OCI-LY7 (cell line): ENCODE measurements at regions of chr18 and their contacts with region 1.

Region 1: DNA sequence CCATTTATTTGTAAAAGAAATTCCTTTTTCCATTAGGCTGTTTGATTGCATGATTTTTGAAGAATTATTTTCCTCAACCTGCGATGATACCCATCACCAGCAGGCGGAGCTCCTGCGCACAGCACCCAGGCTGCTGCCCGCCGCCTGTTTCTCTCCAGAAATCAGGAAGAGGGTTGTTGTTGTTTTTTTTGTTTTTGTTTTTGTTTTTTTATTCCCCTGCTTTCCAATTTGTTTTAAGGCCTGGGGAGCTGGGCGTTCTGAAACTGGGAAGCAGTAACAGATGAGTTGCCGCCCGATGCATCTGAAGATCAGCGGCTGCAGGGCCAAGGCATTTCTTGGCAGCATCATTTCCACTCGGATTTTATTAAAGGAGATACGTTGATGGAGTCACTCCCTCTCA is 132.1 kb downstream of the MBP start:
- DNase-seq: peak; percentile 40
- H3K4me3 ChIP-seq: no peak overlapping the region
- H3K27ac ChIP-seq: no peak overlapping the region
- H3K4me1 ChIP-seq: peaks cover 7% of the 10 kb centered on the region
- CTCF ChIP-seq: peak; percentile 91

Region 2: DNA sequence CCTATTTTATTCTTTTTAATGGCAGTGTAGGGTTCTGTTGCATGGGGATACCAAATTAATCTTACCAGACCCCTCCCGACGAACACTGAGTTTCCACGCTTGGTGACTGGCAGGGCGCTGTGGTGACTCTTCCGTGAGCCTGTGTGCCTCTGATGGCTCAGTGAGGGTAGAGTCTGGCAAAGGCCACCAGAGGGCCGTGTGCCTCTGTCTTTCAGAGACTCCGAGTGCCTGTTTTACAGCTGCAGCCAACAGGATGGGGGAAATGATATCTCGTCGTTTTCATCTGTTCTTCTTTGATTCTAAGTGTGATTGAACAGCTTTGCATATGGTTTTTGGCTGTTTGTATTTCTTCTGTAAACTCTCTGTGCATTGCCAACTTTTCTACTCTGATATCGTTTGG is 78.4 kb before region 1 on chr18:
- CTCF ChIA-PET with region 1: no interaction called
- POLR2A ChIA-PET with region 1: no interaction called
- intact Hi-C with region 1: no loop called
- DNase-seq: peak; percentile 74
- H3K4me3 ChIP-seq: no peak overlapping the region
- H3K27ac ChIP-seq: no peak overlapping the region
- H3K4me1 ChIP-seq: peaks cover 5% of the 10 kb centered on the region
- CTCF ChIP-seq: peak; percentile 78

Region 3: GRCh38 chr18:77013811-77014521 is 13.4 kb after region 1 on chr18:
- CTCF ChIA-PET with region 1: no interaction called
- POLR2A ChIA-PET with region 1: no interaction called
- intact Hi-C with region 1: no loop called
- DNase-seq: no peak
- H3K4me3 ChIP-seq: no peak overlapping the region
- H3K27ac ChIP-seq: no peak overlapping the region
- H3K4me1 ChIP-seq: no peaks in the 10 kb centered on the region
- CTCF ChIP-seq: no peak

Region 4: GRCh38 chr18:77054606-77055428 is 54.3 kb after region 1 on chr18:
- CTCF ChIA-PET with region 1: no interaction called
- POLR2A ChIA-PET with region 1: interaction called, 5 read pairs
- intact Hi-C with region 1: loop called (anchors 2 kb)
- DNase-seq: peak; percentile 83
- H3K4me3 ChIP-seq: peak overlapping the region; percentile 49
- H3K27ac ChIP-seq: peak overlapping the region; percentile 87
- H3K4me1 ChIP-seq: peaks cover 69% of the 10 kb centered on the region
- CTCF ChIP-seq: peak; percentile 73

Region 5: GRCh38 chr18:77061946-77062517 is 61.5 kb after region 1 on chr18:
- CTCF ChIA-PET with region 1: no interaction called
- POLR2A ChIA-PET with region 1: no interaction called
- intact Hi-C with region 1: loop called (anchors 2 kb)
- DNase-seq: peak; percentile 54
- H3K4me3 ChIP-seq: peak overlapping the region; percentile 8
- H3K27ac ChIP-seq: peak overlapping the region; percentile 96
- H3K4me1 ChIP-seq: peaks cover 54% of the 10 kb centered on the region
- CTCF ChIP-seq: peak; percentile 60

Region 6: GRCh38 chr18:77210249-77210648 is 209.7 kb after region 1 on chr18:
- CTCF ChIA-PET with region 1: interaction called, 3 read pairs
- POLR2A ChIA-PET with region 1: no interaction called
- intact Hi-C with region 1: loop called (anchors 2 kb)
- DNase-seq: no peak
- H3K4me3 ChIP-seq: no peak overlapping the region
- H3K27ac ChIP-seq: no peak overlapping the region
- H3K4me1 ChIP-seq: no peaks in the 10 kb centered on the region
- CTCF ChIP-seq: no peak